Heart right ventricle (tissue), 16 donors: ENCODE measurements at regions of chr22 and their contacts with region 1.

Region 1: DNA sequence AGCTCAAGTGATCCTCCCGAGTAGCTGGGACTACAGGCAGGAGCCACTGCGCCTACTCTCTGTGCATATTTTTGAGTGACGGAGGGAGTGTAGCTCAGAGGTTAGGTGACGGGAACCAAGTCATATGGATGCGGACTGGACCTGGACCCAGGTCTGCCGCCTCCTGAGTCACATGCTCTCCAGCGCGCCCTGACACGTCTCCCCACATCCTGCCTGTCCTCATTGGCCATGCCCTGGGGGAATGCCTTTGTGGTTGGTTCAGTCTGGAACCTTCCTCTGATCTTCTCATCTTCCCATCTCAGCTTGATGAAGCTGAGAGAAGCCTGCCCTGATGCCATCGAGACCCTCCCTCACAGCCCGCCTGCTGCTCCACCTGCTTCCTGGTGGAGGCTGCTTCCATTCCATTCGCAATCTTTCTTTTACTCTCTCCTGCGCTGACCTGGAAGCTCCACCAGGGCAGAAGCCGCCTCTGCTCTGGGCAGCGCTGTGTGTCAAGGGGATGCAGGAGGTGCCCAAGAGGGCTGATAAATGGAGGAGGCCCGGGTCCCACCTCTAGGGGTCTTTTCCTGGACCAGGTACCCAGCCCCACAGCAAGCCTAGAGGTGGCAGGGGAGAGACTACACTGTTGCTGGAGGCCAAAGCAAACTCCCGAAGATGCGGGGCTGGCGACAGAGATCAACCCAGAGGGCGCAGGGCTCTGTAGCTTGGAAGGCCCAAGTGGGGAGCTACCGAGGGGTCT is 13.9 kb upstream of the BAIAP2L2 start:
- DNase-seq: no peak
- ATAC-seq: no peak
- H3K4me3 ChIP-seq: no peak overlapping the region
- H3K27ac ChIP-seq: no peak overlapping the region
- H3K4me1 ChIP-seq: no peaks in the 10 kb centered on the region
- H3K27me3 ChIP-seq: no peaks in the 10 kb centered on the region
- CTCF ChIP-seq: no peak

Region 2: DNA sequence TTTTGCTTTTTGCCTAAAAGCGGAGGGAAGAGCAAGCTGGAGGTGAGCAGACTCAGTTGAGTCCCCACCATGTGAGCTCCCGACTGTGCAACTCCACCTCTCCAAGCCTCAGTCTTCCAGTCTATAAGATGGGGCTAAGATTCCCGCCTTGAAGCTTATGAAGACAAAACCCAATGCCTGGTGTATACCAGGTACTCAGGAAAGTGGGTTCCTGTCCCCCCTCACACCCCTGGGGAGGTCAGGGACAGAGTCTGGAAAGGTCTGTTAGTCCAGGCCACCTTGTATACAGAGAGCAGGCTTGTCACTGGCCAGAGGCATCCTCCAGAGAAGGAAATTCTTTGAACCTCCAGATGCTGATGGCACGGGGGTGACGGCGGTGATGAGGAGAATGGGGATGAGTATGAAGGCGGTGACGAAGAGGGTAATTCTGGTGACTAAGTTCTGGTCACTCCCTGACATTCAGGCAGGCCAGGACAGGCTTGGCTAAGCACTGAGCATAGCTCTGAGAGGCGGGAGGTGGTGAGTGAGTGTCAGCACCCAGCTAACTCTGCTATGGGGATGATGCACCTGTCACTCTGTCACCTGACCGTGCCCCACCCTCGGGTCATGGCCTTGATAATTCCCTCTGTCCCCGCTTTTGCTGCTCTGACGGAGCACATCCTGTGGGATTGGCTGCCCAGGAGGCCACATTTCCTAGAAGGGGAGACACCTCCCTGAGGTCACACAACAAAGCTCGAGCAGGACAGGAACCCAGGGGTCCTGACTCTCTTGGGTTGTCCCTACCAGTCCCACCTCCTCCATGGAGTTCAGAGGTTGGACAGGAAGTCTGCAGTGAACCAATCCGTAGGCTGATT is 223.7 kb after region 1 on chr22:
- intact Hi-C with region 1: loop called in 6 of 10 experiments (anchors 5 to 10 kb)
- DNase-seq: no peak
- ATAC-seq: peak in 4 of 8 donors; percentile 7 to 38 (median 28)
- H3K4me3 ChIP-seq: no peak overlapping the region
- H3K27ac ChIP-seq: no peak overlapping the region
- H3K4me1 ChIP-seq: peaks cover 0 to 13% (median 2%) of the 10 kb centered on the region in 9 donors
- H3K27me3 ChIP-seq: peaks cover 0 to 40% (median 0%) of the 10 kb centered on the region in 7 donors
- CTCF ChIP-seq: no peak